Body of pancreas (tissue), 4 donors: ENCODE measurements at regions of chr16 and their contacts with region 1.

Region 1: DNA sequence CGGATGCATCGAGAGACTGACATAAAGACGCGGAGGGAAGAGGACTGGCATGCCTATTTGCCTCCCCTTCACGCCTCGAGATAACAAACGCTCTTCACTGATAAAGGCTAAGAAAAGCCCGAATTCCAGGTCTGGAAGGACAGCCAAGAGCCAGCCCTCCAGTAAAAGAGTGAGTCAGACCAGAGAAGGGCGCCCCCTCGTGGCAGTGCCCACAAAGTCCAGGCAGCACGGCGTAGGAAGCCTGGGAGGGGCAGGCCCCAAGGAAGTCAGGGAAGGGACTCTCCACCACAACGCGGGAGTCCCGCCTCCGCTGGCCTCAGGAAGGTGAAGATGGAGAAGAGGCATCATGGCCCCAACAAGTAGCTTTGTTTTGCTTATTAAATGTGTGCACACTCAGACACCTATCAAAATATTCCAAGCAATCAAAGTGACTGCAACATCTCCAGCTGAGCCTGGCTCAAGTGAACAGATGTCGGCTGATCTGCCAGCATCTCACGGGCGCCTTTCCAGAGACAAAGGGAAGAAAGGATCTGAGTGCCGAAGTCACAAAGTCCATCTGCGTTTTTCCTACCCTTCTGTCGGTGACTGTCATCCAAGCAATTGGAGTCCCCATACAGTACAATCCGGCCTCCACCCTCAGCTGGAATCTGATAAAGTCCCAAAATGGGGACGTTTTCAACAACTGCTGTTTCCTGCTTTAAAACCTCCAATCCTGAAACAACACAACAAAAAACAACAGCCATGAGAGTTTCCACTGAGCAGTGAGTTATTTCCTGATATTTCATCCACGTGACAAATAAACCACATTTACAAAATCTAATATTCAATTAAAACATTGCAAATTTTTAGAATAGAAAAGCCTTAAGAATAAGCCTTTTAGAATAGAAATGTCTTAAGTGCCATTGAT is 20.4 kb upstream of the SLC38A8 start:
- DNase-seq: peak; percentile 76 to 82 (median 78)
- ATAC-seq: peak; percentile 87
- H3K4me3 ChIP-seq: no peak overlapping the region
- H3K27ac ChIP-seq: no peak overlapping the region
- H3K4me1 ChIP-seq: no peaks in the 10 kb centered on the region
- H3K27me3 ChIP-seq: no peaks in the 10 kb centered on the region
- CTCF ChIP-seq: peak; percentile 71 to 90 (median 80)
- POLR2A ChIP-seq: no peak

Region 2: DNA sequence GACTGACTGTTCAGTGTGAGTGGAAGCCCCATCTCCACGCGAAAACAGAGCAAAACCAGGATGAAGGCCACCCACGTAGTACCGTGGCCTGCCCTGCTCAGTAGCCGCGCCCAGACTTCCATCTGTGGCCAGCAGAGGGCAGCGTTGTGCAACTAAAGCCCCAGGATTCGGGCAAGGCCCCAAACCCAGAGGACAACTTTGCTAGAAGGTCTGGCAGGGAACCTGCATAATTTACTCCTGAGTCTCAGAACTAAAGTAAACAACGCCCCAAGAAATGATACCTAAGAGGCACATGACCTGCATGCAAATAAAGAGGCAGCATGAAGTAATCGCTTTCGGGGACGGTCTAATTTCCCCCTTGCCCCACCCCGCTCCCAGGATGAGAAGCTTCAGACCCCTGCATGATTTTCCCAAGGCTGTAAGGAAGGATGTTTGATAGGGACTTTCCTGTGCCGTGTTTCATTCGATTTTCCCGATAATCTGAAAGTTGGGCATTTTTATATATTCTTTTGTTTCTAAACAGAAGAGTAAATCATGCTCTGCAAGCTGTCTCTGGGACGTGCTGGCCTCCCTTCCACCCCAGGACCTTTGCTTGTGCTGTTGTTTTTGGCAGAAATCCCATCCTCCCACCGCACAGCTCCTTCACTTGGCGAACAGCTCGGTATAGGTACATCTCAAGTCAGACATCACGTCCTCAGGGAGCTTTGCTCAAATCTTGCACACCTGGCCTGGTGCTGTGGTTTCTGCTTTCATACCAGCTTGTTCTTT is 236.7 kb before region 1 on chr16:
- intact Hi-C with region 1: loop called (anchors 10 kb)
- DNase-seq: peak; percentile 90 to 92 (median 90)
- ATAC-seq: peak; percentile 95
- H3K4me3 ChIP-seq: no peak overlapping the region
- H3K27ac ChIP-seq: no peak overlapping the region
- H3K4me1 ChIP-seq: peaks cover 11% of the 10 kb centered on the region
- H3K27me3 ChIP-seq: no peaks in the 10 kb centered on the region
- CTCF ChIP-seq: peak; percentile 81 to 94 (median 89)
- POLR2A ChIP-seq: no peak

Region 3: DNA sequence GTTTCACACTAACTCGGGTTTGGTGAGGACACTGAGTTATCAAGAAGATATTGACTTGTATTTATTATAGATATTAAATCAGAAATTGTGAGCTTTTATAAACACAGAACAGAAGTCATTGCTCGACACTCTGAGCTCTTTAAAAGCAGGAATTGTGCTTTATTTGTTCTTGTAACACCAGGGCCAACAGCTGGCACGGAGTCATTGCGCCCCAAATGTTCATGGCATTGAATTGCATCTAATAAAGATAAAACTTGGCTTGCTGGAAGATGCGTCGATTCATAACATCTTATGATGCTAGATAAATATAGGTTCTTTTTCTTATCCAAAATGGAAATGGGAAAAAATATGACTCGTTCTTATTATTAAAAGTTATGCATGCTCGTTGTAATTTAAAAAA is 175.9 kb before region 1 on chr16:
- intact Hi-C with region 1: no loop called
- DNase-seq: peak in 3 of 4 donors; percentile 22 to 61 (median 25)
- ATAC-seq: no peak
- H3K4me3 ChIP-seq: no peak overlapping the region
- H3K27ac ChIP-seq: no peak overlapping the region
- H3K4me1 ChIP-seq: no peaks in the 10 kb centered on the region
- H3K27me3 ChIP-seq: no peaks in the 10 kb centered on the region
- CTCF ChIP-seq: peak in 4 of 7 experiments; percentile 8 to 18 (median 13)
- POLR2A ChIP-seq: no peak

Region 4: GRCh38 chr16:84116720-84117493 is 53.9 kb after region 1 on chr16 and contains the start of gene MBTPS1:
- intact Hi-C with region 1: no loop called
- DNase-seq: peak; percentile 98 to 99 (median 98)
- ATAC-seq: peak; percentile 99
- H3K4me3 ChIP-seq: peak within 1 kb of the TSS; percentile 89 to 92
- H3K27ac ChIP-seq: peak within 1 kb of the TSS; percentile 80 to 94 (median 93)
- H3K4me1 ChIP-seq: peaks cover 24% of the 10 kb centered on the region
- H3K27me3 ChIP-seq: no peaks in the 10 kb centered on the region
- CTCF ChIP-seq: no peak
- POLR2A ChIP-seq: peak; percentile 77 to 80 (median 78)
- total RNA-seq, gene MBTPS1: 58.9 to 75.5 TPM

Region 5: GRCh38 chr16:84156342-84156784 is 93.4 kb after region 1 on chr16:
- intact Hi-C with region 1: no loop called
- DNase-seq: no peak
- ATAC-seq: no peak
- H3K4me3 ChIP-seq: no peak overlapping the region
- H3K27ac ChIP-seq: no peak overlapping the region
- H3K4me1 ChIP-seq: no peaks in the 10 kb centered on the region
- H3K27me3 ChIP-seq: no peaks in the 10 kb centered on the region
- CTCF ChIP-seq: no peak
- POLR2A ChIP-seq: no peak